ENCODE measurements at regions of chr2 and their contacts with region 1.

Region 1: DNA sequence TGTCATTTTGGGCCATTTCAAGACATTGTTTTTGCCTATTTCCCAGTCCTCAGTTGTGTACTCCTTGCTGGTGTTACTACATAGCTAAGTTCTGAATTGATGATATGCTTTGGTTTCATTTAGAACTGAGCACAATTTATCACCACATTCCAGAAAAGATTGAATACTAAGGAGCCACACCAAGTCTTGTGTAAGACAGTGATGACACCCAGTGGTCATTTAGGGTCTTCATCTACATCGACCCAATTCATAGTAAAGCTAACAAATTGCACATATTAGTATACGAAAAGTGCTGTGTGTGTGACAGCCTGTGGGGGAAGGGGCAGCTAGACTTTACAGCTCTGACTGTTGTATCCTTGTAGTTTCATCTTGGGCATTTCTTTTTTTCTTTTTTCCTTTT is 10.9 kb upstream of the DLX2 start:
- DNase-seq: no peak
- H3K4me3 ChIP-seq: no peak overlapping the region
- H3K27ac ChIP-seq: no peak overlapping the region
- H3K4me1 ChIP-seq: peaks cover 3% of the 10 kb centered on the region
- H3K27me3 ChIP-seq: no peaks in the 10 kb centered on the region
- CTCF ChIP-seq: peak; percentile 56

Region 2: DNA sequence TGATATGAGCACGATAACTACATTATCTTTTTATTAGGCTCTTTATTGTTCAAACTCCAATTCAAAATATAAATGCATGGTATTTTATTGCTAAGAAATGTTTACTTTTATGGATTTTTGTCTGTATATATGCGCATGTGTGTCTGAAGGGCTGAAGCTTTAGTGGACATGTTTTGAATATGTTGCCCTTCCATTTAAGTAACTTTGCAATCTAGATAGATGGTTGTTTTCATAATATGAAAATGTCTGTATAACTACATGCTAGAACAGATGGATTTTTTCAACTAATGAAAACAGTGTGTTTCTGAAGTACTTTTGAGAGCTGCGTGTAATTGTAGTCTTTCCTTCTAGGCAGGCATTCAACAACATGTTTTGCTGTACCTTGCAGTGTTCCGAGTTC is 660.8 kb before region 1 on chr2:
- CTCF ChIA-PET with region 1: interaction called, 10 read pairs
- POLR2A ChIA-PET with region 1: no interaction called
- intact Hi-C with region 1: no loop called
- DNase-seq: no peak
- H3K4me3 ChIP-seq: no peak overlapping the region
- H3K27ac ChIP-seq: no peak overlapping the region
- H3K4me1 ChIP-seq: no peaks in the 10 kb centered on the region
- H3K27me3 ChIP-seq: no peaks in the 10 kb centered on the region
- CTCF ChIP-seq: no peak

Region 3: GRCh38 chr2:171930385-171930784 is 183.2 kb before region 1 on chr2:
- CTCF ChIA-PET with region 1: no interaction called
- POLR2A ChIA-PET with region 1: no interaction called
- intact Hi-C with region 1: no loop called
- DNase-seq: no peak
- H3K4me3 ChIP-seq: no peak overlapping the region
- H3K27ac ChIP-seq: no peak overlapping the region
- H3K4me1 ChIP-seq: no peaks in the 10 kb centered on the region
- H3K27me3 ChIP-seq: no peaks in the 10 kb centered on the region
- CTCF ChIP-seq: no peak

Region 4: GRCh38 chr2:172052000-172052983 is 61.3 kb before region 1 on chr2:
- CTCF ChIA-PET with region 1: no interaction called
- POLR2A ChIA-PET with region 1: no interaction called
- intact Hi-C with region 1: no loop called
- DNase-seq: no peak
- H3K4me3 ChIP-seq: no peak overlapping the region
- H3K27ac ChIP-seq: no peak overlapping the region
- H3K4me1 ChIP-seq: no peaks in the 10 kb centered on the region
- H3K27me3 ChIP-seq: no peaks in the 10 kb centered on the region
- CTCF ChIP-seq: no peak

Region 5: DNA sequence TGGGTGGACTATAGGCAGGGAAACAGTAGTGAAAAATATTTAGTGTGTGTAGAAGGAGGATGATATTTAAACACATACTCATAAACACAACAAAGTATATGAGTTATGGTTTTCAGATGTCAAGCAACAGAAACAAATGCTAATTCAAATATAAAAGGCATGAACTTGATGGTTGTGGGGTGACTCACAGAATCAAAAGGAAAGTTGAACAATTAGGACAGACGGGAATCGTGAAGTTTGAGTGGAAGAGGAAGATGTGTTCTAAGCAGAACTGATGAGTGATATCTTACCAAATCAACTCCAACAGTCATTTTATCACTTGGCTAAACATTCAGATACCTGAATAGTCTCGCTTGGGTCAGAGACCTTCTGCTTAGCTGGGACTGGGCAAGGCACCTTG is 260.1 kb after region 1 on chr2:
- CTCF ChIA-PET with region 1: no interaction called
- POLR2A ChIA-PET with region 1: no interaction called
- intact Hi-C with region 1: no loop called
- DNase-seq: no peak
- H3K4me3 ChIP-seq: no peak overlapping the region
- H3K27ac ChIP-seq: no peak overlapping the region
- H3K4me1 ChIP-seq: no peaks in the 10 kb centered on the region
- H3K27me3 ChIP-seq: no peaks in the 10 kb centered on the region
- CTCF ChIP-seq: no peak

Measured in PC-9 (cell line).